Caco-2 (cell line): ENCODE measurements at regions of chr12 and their contacts with region 1.

Region 1: GRCh38 chr12:1795785-1796514 is 24.4 kb upstream of the LRTM2 start:
- DNase-seq: peak; percentile 93 to 97
- H3K4me3 ChIP-seq: peak overlapping the region; percentile 40
- H3K4me3 Mint-ChIP-seq: peak overlapping the region; percentile 82
- H3K27ac Mint-ChIP-seq: peak overlapping the region; percentile 82
- H3K4me1 ChIP-seq: peaks cover 8% of the 10 kb centered on the region; the same call in 1 of the 2 replicates
- H3K4me1 Mint-ChIP-seq: peaks cover 9% of the 10 kb centered on the region
- H3K27me3 ChIP-seq: no peaks in the 10 kb centered on the region
- H3K27me3 Mint-ChIP-seq: no peaks in the 10 kb centered on the region
- CTCF ChIP-seq: peak; percentile 76 to 99

Region 2: DNA sequence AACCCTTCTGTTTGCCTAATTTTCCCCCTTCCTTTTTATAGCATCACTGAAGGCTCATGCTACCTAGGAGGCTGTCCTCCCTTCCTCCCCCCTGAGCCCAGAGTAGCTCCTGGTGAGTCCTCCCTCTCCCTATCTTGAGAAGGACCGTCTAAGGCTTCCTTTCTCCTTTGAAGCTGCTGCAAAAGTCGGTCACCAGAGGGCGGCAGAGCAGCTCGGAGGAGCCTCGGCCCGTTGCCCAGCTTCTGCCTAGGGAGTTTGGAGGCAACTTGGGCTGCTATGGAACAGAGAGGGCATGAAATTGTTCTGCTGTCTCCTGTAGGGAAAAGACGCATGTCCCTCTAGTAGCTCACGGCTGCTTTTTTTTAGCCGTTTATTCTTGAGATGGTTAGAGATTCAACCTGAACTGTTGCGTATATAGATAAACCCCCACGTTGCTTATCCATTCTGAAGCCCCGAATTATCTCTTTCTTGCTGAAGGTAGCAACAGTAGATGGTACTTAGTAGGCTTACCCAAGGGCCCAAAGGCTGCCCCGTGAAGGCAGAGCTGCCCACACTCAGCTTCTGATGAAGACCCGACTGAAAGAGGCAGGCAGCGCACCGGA is 161.3 kb before region 1 on chr12:
- CTCF ChIA-PET with region 1: interaction called, 52 read pairs
- POLR2A ChIA-PET with region 1: no interaction called
- intact Hi-C with region 1: loop called (anchors 1 kb)
- DNase-seq: peak; percentile 79 to 87
- H3K4me3 ChIP-seq: no peak overlapping the region
- H3K4me3 Mint-ChIP-seq: no peak overlapping the region
- H3K27ac Mint-ChIP-seq: no peak overlapping the region
- H3K4me1 ChIP-seq: peaks cover 17% of the 10 kb centered on the region
- H3K4me1 Mint-ChIP-seq: peaks cover 16% of the 10 kb centered on the region
- H3K27me3 ChIP-seq: no peaks in the 10 kb centered on the region
- H3K27me3 Mint-ChIP-seq: no peaks in the 10 kb centered on the region
- CTCF ChIP-seq: peak; percentile 93 to 96

Region 3: GRCh38 chr12:1661553-1662335 is 134.2 kb before region 1 on chr12:
- CTCF ChIA-PET with region 1: interaction called, 97 read pairs
- POLR2A ChIA-PET with region 1: no interaction called
- intact Hi-C with region 1: loop called (anchors 2 kb)
- DNase-seq: peak; percentile 88 to 89
- H3K4me3 ChIP-seq: peak overlapping the region; percentile 67
- H3K4me3 Mint-ChIP-seq: peak overlapping the region; percentile 82
- H3K27ac Mint-ChIP-seq: no peak overlapping the region
- H3K4me1 ChIP-seq: peaks cover 21% of the 10 kb centered on the region
- H3K4me1 Mint-ChIP-seq: peaks cover 1% of the 10 kb centered on the region
- H3K27me3 ChIP-seq: no peaks in the 10 kb centered on the region
- H3K27me3 Mint-ChIP-seq: no peaks in the 10 kb centered on the region
- CTCF ChIP-seq: no peak

Region 4: DNA sequence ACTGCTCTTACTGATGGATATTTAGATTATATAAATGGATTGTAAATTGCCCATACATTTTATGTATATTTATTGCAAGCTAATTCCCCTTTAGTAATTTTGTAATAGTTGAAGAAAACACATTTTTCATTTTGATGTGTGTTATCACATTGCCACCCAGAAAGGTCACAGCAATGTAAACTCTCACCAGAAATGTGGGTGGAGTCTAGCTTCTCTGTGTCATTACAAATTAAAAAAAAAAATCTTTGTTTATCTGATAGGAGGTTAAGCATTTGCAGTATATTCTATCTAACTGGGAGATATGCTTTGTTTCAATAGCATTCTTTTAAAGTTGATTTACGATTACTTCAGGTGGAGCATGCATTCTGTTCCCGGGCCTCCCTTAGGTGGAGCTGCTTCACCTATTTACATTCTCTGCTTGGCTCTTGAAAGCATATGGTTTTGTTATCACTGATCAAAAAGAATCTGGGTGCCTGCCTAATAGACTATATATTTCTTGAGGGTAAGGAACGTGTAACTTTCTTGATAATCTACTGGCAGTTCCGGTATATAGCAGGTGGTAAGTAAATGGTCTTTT is 97.2 kb before region 1 on chr12:
- CTCF ChIA-PET with region 1: interaction called, 45 read pairs
- POLR2A ChIA-PET with region 1: no interaction called
- intact Hi-C with region 1: loop called (anchors 1 kb)
- DNase-seq: peak; percentile 69 to 74
- H3K4me3 ChIP-seq: no peak overlapping the region
- H3K4me3 Mint-ChIP-seq: no peak overlapping the region
- H3K27ac Mint-ChIP-seq: peak overlapping the region; percentile 26
- H3K4me1 ChIP-seq: peaks cover 45% of the 10 kb centered on the region
- H3K4me1 Mint-ChIP-seq: peaks cover 25% of the 10 kb centered on the region
- H3K27me3 ChIP-seq: no peaks in the 10 kb centered on the region
- H3K27me3 Mint-ChIP-seq: no peaks in the 10 kb centered on the region
- CTCF ChIP-seq: peak in 1 of 2 experiments; percentile 46

Region 5: GRCh38 chr12:1740161-1740948 is 55.6 kb before region 1 on chr12:
- CTCF ChIA-PET with region 1: interaction called, 12 read pairs
- POLR2A ChIA-PET with region 1: interaction called, 3 read pairs
- intact Hi-C with region 1: no loop called
- DNase-seq: no peak
- H3K4me3 ChIP-seq: no peak overlapping the region
- H3K4me3 Mint-ChIP-seq: peak overlapping the region; percentile 7
- H3K27ac Mint-ChIP-seq: peak overlapping the region; percentile 71
- H3K4me1 ChIP-seq: peaks cover 56% of the 10 kb centered on the region
- H3K4me1 Mint-ChIP-seq: peaks cover 44% of the 10 kb centered on the region
- H3K27me3 ChIP-seq: no peaks in the 10 kb centered on the region
- H3K27me3 Mint-ChIP-seq: no peaks in the 10 kb centered on the region
- CTCF ChIP-seq: no peak

Region 6: GRCh38 chr12:1842183-1842904 is 46.4 kb after region 1 on chr12:
- CTCF ChIA-PET with region 1: no interaction called
- POLR2A ChIA-PET with region 1: no interaction called
- intact Hi-C with region 1: no loop called
- DNase-seq: peak in 1 of 2 experiments; percentile 29
- H3K4me3 ChIP-seq: no peak overlapping the region
- H3K4me3 Mint-ChIP-seq: no peak overlapping the region
- H3K27ac Mint-ChIP-seq: no peak overlapping the region
- H3K4me1 ChIP-seq: peaks cover 10% of the 10 kb centered on the region
- H3K4me1 Mint-ChIP-seq: peaks cover 11% of the 10 kb centered on the region
- H3K27me3 ChIP-seq: no peaks in the 10 kb centered on the region
- H3K27me3 Mint-ChIP-seq: peaks cover 21% of the 10 kb centered on the region
- CTCF ChIP-seq: no peak

Region 7: DNA sequence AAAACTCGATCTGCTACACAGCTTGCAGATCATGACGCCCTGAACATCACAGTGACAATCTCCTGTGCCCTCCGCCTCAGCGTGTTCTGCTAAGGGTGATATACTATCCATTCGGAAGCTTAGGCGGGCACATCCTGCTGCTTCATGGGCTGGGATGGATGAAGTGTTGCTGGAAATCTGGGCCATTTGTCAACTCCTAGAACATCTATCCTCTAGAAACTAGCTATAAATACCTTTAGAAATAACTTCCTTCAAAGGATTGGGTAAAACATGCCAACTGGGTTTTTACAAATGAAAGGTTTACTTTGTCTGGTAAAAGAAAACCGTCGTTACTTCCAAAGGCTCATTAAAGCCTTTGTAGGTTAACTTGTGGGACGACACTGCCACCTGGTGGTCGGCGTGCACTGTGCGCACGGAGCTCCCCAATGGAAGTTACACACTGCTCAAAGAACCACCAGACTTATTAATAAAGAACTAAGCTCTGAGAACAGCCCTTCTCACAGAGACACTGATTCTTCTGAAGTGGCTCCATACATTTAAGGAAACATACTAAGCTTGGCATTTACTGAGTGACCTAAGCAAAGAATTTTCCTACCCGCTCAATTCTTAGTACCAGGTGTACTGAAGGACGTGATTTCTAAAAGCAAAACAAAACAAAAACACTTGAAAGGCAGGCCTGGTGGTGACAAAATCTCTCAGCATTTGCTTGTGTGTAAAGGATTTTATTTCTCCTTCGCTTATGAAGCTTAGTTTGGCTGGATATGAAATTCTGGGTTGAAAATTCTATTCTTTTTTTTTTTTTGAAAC is 144.1 kb after region 1 on chr12:
- CTCF ChIA-PET with region 1: interaction called, 45 read pairs
- POLR2A ChIA-PET with region 1: interaction called, 3 read pairs
- intact Hi-C with region 1: loop called (anchors 1 kb)
- DNase-seq: peak; percentile 84 to 91
- H3K4me3 ChIP-seq: no peak overlapping the region
- H3K4me3 Mint-ChIP-seq: no peak overlapping the region
- H3K27ac Mint-ChIP-seq: no peak overlapping the region
- H3K4me1 ChIP-seq: no peaks in the 10 kb centered on the region
- H3K4me1 Mint-ChIP-seq: no peaks in the 10 kb centered on the region
- H3K27me3 ChIP-seq: no peaks in the 10 kb centered on the region
- H3K27me3 Mint-ChIP-seq: no peaks in the 10 kb centered on the region
- CTCF ChIP-seq: peak; percentile 98 to 99

Region 8: DNA sequence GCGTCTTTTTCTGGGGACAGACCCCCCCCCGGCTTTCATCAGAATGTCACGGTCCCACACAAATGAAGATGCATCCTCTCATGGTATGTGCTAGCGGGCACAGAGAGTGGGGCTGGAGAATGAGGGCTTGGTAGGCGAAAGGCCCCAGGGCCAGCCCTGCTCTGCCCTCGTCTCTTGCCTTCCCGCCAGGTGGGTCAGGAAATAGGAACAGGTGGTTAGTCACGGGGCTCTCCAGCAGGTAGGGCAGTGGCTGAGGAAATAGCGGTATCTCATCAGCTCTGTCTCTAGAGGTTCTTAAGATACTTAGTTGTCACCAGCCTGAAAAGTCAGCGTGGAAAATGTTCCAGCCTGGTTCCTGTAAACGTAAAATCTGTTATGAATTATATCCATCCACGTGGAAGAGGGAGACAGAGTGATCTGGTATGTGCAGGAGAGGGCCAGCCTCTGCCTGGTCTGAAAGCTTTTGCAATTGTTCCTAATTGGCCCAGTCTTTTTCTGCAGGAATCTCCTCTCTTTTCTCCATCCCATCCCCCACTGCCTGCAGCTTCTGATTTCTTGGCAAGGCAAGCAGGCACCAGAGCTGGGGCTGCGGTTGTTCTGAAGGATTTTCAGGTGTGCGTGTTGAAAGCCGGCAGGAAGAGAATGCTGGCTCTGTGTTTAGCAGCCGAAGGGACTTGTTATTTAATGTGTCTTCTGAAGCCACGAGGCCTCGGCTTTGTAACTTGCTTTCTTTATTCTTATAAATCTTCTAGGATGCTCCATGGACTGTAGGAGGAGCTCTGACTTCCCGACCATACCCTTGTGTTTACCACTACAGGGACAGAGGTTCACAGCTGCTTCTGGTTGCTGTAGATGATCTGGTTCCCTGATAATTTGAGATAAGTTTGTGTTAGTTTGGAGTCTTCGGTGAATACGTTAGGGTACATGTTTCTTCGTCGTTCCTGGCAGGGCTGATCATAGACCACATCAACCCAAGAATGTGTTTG is 387.9 kb after region 1 on chr12:
- CTCF ChIA-PET with region 1: no interaction called
- POLR2A ChIA-PET with region 1: no interaction called
- intact Hi-C with region 1: no loop called
- DNase-seq: no peak
- H3K4me3 ChIP-seq: no peak overlapping the region
- H3K4me3 Mint-ChIP-seq: no peak overlapping the region
- H3K27ac Mint-ChIP-seq: no peak overlapping the region
- H3K4me1 ChIP-seq: no peaks in the 10 kb centered on the region
- H3K4me1 Mint-ChIP-seq: peaks cover 6% of the 10 kb centered on the region
- H3K27me3 ChIP-seq: peaks cover 1% of the 10 kb centered on the region
- H3K27me3 Mint-ChIP-seq: peaks cover 18% of the 10 kb centered on the region
- CTCF ChIP-seq: peak in 1 of 2 experiments; percentile 40